Aorta (tissue), 5 donors: ENCODE measurements at regions of chr6 and their contacts with region 1.

Region 1: DNA sequence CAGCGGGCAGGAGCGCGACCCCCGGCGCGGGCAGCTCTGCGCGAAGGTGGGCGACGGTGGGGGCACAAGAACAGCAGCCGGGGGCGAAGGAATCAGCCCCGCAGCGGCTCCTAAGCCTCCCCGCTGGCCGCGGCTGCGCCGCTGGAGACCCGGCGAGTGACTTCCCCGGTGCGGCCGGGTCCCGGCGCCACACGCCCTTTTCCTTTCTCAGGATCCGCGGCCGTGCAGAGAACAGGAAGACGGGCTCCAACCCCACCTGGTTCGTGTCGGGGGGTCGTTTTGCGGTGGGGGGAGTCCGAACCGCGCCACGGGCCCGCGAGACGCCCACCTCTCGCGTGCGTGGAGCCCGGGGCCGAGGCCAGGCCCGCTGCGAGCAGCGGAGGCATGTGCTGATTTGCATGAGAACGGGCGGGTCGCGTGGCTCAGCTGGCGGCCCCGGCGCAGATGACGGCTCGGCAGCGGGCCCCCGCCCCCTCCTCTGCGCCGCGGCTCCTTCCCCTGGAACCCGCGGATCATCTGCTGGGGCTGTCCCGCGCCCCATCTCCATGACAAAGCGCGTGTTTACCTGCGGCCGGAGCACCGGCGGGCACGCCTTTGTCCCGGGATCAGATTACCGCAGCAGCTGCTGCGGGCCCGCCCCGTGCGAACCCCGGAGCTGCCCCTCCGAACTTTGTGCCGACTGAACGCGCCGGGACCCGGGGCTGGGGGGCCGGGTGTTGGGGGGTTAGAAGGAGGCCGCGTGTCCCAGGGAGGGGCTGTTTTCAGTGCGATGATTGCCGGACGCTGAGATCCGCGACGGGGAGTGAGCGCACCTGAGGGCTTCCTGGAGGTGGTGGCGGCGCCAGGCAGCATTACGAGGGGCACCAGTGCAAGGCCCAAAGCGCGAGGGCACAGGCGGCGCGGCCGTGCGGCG is 4.9 kb upstream of the DLL1 start:
- DNase-seq: no peak
- ATAC-seq: peak; percentile 4
- H3K4me3 ChIP-seq: peak overlapping the region in 1 of 2 donors; percentile 36
- H3K27ac ChIP-seq: no peak overlapping the region
- H3K4me1 ChIP-seq: no peaks in the 10 kb centered on the region
- H3K27me3 ChIP-seq: no peaks in the 10 kb centered on the region

Region 2: GRCh38 chr6:169831450-169832246 is 464.1 kb before region 1 on chr6:
- intact Hi-C with region 1: loop called (anchors 2 to 5 kb)
- DNase-seq: peak; percentile 79 to 93
- ATAC-seq: peak; percentile 80
- H3K4me3 ChIP-seq: no peak overlapping the region
- H3K27ac ChIP-seq: no peak overlapping the region
- H3K4me1 ChIP-seq: no peaks in the 10 kb centered on the region
- H3K27me3 ChIP-seq: no peaks in the 10 kb centered on the region

Region 3: GRCh38 chr6:169959136-169960002 is 336.4 kb before region 1 on chr6:
- intact Hi-C with region 1: loop called in 1 of 2 experiments (anchors 10 kb)
- DNase-seq: peak; percentile 69 to 74
- ATAC-seq: no peak
- H3K4me3 ChIP-seq: no peak overlapping the region
- H3K27ac ChIP-seq: no peak overlapping the region
- H3K4me1 ChIP-seq: no peaks in the 10 kb centered on the region
- H3K27me3 ChIP-seq: no peaks in the 10 kb centered on the region

Region 4: DNA sequence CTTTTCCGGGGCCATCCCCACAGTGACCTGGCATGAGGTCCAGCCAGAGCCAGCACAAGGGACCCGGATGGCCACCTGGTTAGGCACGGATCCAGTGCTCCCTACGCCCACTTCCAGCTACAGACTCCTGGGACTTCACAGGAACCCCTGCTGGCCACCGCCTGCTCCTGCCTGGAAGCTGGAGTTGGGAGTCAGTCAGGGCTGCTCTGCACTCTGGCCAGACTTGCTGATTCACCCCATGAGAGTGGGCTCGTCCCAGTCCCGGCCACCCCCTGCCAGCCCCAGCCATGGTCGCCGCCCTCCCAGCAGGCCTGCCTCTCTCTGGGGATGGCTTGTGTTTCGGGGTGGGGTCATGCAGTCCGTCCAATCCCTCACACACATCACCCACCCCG is 130.7 kb before region 1 on chr6:
- intact Hi-C with region 1: loop called in 1 of 2 experiments (anchors 10 kb)
- DNase-seq: peak; percentile 86 to 90
- ATAC-seq: peak; percentile 82
- H3K4me3 ChIP-seq: no peak overlapping the region
- H3K27ac ChIP-seq: peak overlapping the region in 1 of 2 donors; percentile 49
- H3K4me1 ChIP-seq: peaks cover 0 to 3% of the 10 kb centered on the region in 2 donors
- H3K27me3 ChIP-seq: no peaks in the 10 kb centered on the region

Region 5: DNA sequence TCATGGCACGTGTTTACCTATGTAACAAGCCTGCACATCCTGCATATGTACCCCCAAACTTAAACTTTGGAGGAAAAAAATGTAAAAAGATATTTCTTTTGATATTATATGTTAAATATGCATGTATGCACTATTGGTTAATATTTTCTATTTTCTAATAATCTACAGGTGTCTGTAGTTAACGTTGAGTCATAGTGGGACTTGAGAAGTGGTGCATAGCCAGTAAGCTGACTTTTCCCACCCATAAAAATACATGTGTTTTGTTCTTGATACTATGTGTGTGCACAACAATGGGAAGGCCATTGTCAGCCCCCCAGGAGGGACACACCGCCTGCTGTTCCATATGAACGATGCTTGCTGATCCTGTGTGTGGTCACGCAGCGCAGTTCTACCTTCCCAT is 59.9 kb after region 1 on chr6:
- intact Hi-C with region 1: no loop called
- DNase-seq: no peak
- ATAC-seq: no peak
- H3K4me3 ChIP-seq: no peak overlapping the region
- H3K27ac ChIP-seq: no peak overlapping the region
- H3K4me1 ChIP-seq: no peaks in the 10 kb centered on the region
- H3K27me3 ChIP-seq: no peaks in the 10 kb centered on the region